IMR-90 (cell line): ENCODE measurements at regions of chr11 and their contacts with region 1.

Region 1: GRCh38 chr11:110711776-110712658 is at the start of gene ARHGAP20:
- DNase-seq: peak; percentile 71
- ATAC-seq: peak; percentile 91
- H3K4me3 ChIP-seq: peak within 1 kb of the TSS; percentile 69
- H3K27ac ChIP-seq: peak within 1 kb of the TSS; percentile 81
- H3K4me1 ChIP-seq: peaks cover 6% of the 10 kb centered on the region
- H3K27me3 ChIP-seq: no peaks in the 10 kb centered on the region
- CTCF ChIP-seq: no peak
- POLR2A ChIP-seq: no peak
- RAD21 ChIP-seq: peak; percentile 10; the same call in 1 of the 2 replicates
- total RNA-seq, gene ARHGAP20: 2.5 and 2.8 TPM in 2 replicates

Region 2: DNA sequence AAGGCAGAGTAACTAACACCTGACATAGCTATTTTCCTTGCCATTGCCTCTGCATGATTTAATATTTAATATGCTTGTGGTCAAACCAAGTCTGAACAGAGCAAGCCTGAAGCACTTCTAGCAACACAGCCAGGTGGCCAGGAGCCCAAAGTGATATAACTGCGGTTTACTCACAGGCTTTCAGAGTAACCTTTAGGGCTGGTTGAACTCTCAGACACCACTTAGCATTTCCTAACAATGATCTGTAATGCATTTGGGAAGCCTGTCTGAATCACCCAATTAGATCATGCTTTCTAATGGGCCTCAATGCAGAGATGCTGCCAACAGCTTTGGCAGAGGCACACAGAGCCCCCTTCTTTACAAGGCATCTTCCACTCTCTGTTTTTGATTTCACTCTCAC is 186.1 kb before region 1 on chr11:
- CTCF ChIA-PET with region 1: no interaction called
- POLR2A ChIA-PET with region 1: no interaction called
- dilution Hi-C with region 1: no loop called
- in situ Hi-C with region 1: no loop called
- intact Hi-C with region 1: loop called (anchors 2 kb)
- DNase-seq: peak; percentile 92
- ATAC-seq: peak; percentile 62
- H3K4me3 ChIP-seq: no peak overlapping the region
- H3K27ac ChIP-seq: no peak overlapping the region
- H3K4me1 ChIP-seq: peaks cover 14% of the 10 kb centered on the region
- H3K27me3 ChIP-seq: no peaks in the 10 kb centered on the region
- CTCF ChIP-seq: no peak
- POLR2A ChIP-seq: no peak
- RAD21 ChIP-seq: no peak

Region 3: GRCh38 chr11:110738641-110739040 is 26.6 kb after region 1 on chr11:
- CTCF ChIA-PET with region 1: no interaction called
- POLR2A ChIA-PET with region 1: no interaction called
- dilution Hi-C with region 1: no loop called
- in situ Hi-C with region 1: no loop called
- intact Hi-C with region 1: no loop called
- DNase-seq: no peak
- ATAC-seq: no peak
- H3K4me3 ChIP-seq: no peak overlapping the region
- H3K27ac ChIP-seq: no peak overlapping the region
- H3K4me1 ChIP-seq: no peaks in the 10 kb centered on the region
- H3K27me3 ChIP-seq: no peaks in the 10 kb centered on the region
- CTCF ChIP-seq: no peak
- POLR2A ChIP-seq: no peak
- RAD21 ChIP-seq: no peak

Region 4: DNA sequence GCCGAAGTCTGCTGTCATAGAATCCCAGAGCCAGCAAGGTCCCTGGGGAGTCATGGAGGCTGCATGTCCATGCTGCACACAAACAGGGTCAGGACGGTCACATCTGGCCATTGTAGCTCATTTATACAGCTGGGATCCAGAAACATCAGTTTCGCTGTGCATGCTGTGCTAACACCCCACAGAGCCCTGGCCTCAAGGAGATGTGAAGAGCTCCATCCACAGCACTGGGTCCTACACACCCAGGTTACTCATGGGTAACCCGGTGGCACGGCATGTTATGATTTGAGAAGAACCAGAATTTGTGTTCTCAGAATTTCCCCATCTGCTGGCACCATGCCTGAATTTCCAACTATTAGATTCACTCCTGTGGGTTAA is 146.5 kb after region 1 on chr11:
- CTCF ChIA-PET with region 1: no interaction called
- POLR2A ChIA-PET with region 1: no interaction called
- dilution Hi-C with region 1: no loop called
- in situ Hi-C with region 1: no loop called
- intact Hi-C with region 1: loop called (anchors 10 kb)
- DNase-seq: no peak
- ATAC-seq: no peak
- H3K4me3 ChIP-seq: no peak overlapping the region
- H3K27ac ChIP-seq: peak overlapping the region; percentile 36; the same call in 1 of the 2 replicates
- H3K4me1 ChIP-seq: peaks cover 13% of the 10 kb centered on the region
- H3K27me3 ChIP-seq: no peaks in the 10 kb centered on the region; the same call in 1 of the 2 replicates
- CTCF ChIP-seq: no peak
- POLR2A ChIP-seq: no peak
- RAD21 ChIP-seq: no peak

Region 5: GRCh38 chr11:110972640-110973039 is 260.6 kb after region 1 on chr11:
- CTCF ChIA-PET with region 1: no interaction called
- POLR2A ChIA-PET with region 1: no interaction called
- dilution Hi-C with region 1: no loop called
- in situ Hi-C with region 1: no loop called
- intact Hi-C with region 1: loop called (anchors 5 kb)
- DNase-seq: peak; percentile 94
- ATAC-seq: peak; percentile 95
- H3K4me3 ChIP-seq: no peak overlapping the region
- H3K27ac ChIP-seq: peak overlapping the region; percentile 73; the same call in 1 of the 2 replicates
- H3K4me1 ChIP-seq: peaks cover 9% of the 10 kb centered on the region
- H3K27me3 ChIP-seq: no peaks in the 10 kb centered on the region
- CTCF ChIP-seq: no peak
- POLR2A ChIP-seq: no peak
- RAD21 ChIP-seq: peak; percentile 15; the same call in 1 of the 2 replicates

Region 6: DNA sequence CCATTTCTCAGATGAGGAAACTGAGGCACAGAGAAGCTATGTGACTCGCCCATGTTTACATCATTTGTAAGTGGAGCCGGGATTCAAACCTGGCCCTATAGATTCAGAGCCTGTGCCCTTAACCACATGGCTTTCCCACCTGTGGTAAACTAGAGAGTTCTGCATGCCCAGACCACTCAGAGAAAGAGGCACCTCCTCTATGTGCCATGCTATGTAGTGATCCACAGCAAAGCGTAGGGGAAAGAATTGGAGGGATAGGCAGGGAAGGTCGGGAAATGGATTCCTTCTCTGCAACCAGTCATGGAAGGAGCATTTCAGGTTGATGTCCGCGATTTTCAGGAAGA is 518.1 kb after region 1 on chr11:
- CTCF ChIA-PET with region 1: interaction called, 4 read pairs
- POLR2A ChIA-PET with region 1: no interaction called
- dilution Hi-C with region 1: no loop called
- in situ Hi-C with region 1: loop called (anchors 5 kb)
- intact Hi-C with region 1: loop called (anchors 1 kb)
- DNase-seq: no peak
- ATAC-seq: peak; percentile 50
- H3K4me3 ChIP-seq: no peak overlapping the region
- H3K27ac ChIP-seq: peak overlapping the region; percentile 33; the same call in 1 of the 2 replicates
- H3K4me1 ChIP-seq: peaks cover 8% of the 10 kb centered on the region
- H3K27me3 ChIP-seq: no peaks in the 10 kb centered on the region
- CTCF ChIP-seq: no peak
- POLR2A ChIP-seq: no peak
- RAD21 ChIP-seq: no peak

Region 7: DNA sequence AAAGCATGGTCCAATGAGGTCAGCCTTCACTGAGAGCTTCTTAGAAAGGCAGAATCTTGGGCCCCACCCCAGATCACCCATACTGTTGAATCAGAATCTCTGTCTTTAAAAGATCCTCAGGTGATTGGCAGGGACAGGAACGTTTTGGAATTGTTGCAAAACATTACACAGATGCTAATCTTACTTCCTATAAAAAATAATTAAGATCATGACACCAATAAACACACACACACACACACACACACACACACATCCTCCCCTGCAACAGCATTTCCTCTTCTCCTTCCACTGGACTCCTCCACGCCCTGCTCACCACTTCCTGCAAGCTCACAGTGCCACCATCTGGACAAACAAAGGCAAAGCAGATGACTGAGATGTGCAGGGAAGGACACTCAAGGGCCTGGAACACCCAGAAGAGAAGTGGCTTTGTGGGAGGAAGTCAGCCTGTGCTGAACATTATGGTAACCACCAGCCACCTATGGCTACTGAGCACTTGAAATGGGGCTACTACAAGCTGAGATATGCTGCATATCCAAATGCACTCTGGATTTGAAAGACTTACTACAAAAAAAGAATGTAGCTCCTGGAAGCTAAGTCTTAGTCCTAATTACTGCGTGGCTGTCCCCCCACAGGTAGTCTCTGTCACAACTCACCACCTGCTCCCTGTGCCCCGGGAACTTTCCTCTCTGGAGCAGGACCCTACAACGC is 734.5 kb after region 1 on chr11:
- CTCF ChIA-PET with region 1: no interaction called
- POLR2A ChIA-PET with region 1: no interaction called
- dilution Hi-C with region 1: no loop called
- in situ Hi-C with region 1: no loop called
- intact Hi-C with region 1: loop called (anchors 2 kb)
- DNase-seq: peak; percentile 94
- ATAC-seq: peak; percentile 98
- H3K4me3 ChIP-seq: no peak overlapping the region
- H3K27ac ChIP-seq: no peak overlapping the region
- H3K4me1 ChIP-seq: no peaks in the 10 kb centered on the region; the same call in 1 of the 2 replicates
- H3K27me3 ChIP-seq: no peaks in the 10 kb centered on the region; the same call in 1 of the 2 replicates
- CTCF ChIP-seq: peak; percentile 95
- POLR2A ChIP-seq: 0 out of 2 replicates have a peak, but pooled peaks have one; percentile 48
- RAD21 ChIP-seq: peak; percentile 99

Region 8: DNA sequence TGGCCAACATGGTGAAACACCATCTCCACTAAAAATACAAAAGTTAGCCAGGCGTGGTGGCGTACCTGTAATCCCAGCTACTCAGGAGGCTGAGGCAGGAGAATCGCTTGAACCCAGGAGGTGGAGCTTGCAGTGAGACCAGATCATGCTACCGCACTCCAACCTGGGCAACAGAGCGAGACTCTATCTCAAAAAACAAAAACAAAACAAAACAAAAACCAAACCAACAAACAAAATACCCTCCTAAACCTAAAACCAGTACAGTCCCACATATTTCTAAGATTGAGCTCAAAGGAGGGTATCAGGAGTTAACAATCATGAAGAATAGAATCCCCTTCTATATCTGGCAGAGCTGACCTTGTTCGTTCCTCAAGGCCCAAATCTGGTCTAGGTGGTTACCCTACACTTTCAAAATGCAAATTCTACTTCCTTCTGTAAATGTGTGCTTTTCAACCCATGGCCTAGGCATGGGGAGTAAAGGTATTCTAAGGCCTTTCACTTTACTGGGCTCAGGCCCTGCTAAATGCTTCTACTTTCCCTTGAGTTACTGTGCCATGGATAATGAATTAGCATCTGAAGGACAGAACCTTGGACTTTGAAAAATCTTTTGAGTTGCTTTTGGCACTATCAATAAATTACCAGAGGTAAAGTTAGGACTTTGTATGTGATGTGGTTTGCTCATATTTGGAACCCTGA is 1064.5 kb after region 1 on chr11:
- CTCF ChIA-PET with region 1: no interaction called
- POLR2A ChIA-PET with region 1: no interaction called
- dilution Hi-C with region 1: no loop called
- in situ Hi-C with region 1: no loop called
- intact Hi-C with region 1: no loop called
- DNase-seq: no peak
- ATAC-seq: no peak
- H3K4me3 ChIP-seq: no peak overlapping the region
- H3K27ac ChIP-seq: no peak overlapping the region
- H3K4me1 ChIP-seq: peaks cover 4% of the 10 kb centered on the region
- H3K27me3 ChIP-seq: no peaks in the 10 kb centered on the region
- CTCF ChIP-seq: no peak
- POLR2A ChIP-seq: no peak
- RAD21 ChIP-seq: no peak